Lower leg skin (tissue), 4 donors: ENCODE measurements at regions of chr13 and their contacts with region 1.

Region 1: GRCh38 chr13:101127741-101128353 is 288.5 kb downstream of the NALCN start:
- DNase-seq: no peak
- H3K4me3 ChIP-seq: no peak overlapping the region
- CTCF ChIP-seq: no peak
- POLR2A ChIP-seq: no peak

Region 2: GRCh38 chr13:100573121-100573520 is 554.7 kb before region 1 on chr13:
- intact Hi-C with region 1: loop called (anchors 10 kb)
- DNase-seq: peak; percentile 58 to 90
- H3K4me3 ChIP-seq: no peak overlapping the region
- CTCF ChIP-seq: peak in 1 of 3 donors; percentile 16
- POLR2A ChIP-seq: no peak